Esophagus muscularis mucosa (tissue), 4 donors: ENCODE measurements at regions of chr1 and their contacts with region 1.

Region 1: GRCh38 chr1:221435504-221435904 is 306.4 kb downstream of the DUSP10 start:
- DNase-seq: no peak
- H3K4me3 ChIP-seq: no peak overlapping the region
- H3K27ac ChIP-seq: peak overlapping the region; percentile 3 to 48 (median 23)
- H3K4me1 ChIP-seq: peaks cover 12 to 26% (median 24%) of the 10 kb centered on the region in 4 donors
- H3K27me3 ChIP-seq: no peaks in the 10 kb centered on the region
- CTCF ChIP-seq: peak; percentile 93 to 99 (median 95)
- EP300 ChIP-seq: no peak
- POLR2A ChIP-seq: no peak

Region 2: DNA sequence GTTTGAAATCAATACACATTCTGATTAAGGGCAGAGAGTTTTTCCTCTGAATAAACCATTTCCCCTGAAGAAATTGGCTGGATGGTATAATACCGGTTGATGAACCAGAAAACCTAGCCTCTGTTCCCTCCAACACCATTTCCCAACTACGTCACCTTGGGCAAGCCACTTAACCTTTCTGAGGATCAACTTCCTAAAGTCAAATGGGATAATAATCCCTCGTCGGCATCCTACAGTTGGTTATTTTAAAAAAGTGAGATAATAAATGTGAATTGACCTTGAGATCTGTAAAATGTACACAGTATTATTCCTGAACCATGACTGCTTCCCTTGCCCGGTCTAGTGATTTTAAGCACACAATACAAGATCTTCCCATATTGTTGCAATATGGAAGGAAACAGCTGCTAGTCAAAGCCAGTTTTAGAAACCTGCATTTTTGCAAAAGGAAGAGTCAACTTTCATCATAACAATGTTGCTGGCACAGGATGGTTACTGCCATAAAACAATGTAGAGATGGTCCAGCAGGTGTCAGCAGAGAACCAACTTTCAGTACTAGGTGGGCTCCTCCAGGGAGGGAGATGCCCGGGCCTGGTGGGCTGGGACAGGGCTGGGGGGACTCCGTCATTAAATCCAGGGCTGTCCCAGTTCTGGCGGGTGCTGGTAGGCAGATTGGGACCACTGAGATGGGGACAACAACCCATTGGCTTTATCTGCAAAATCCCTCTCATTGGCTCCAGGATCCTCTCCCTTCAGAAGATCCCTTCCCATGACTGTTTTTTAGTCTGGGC is 561.4 kb before region 1 on chr1:
- intact Hi-C with region 1: loop called (anchors 5 kb)
- DNase-seq: no peak
- H3K4me3 ChIP-seq: no peak overlapping the region
- H3K27ac ChIP-seq: no peak overlapping the region
- H3K4me1 ChIP-seq: peaks cover 29 to 44% (median 39%) of the 10 kb centered on the region in 4 donors
- H3K27me3 ChIP-seq: no peaks in the 10 kb centered on the region
- CTCF ChIP-seq: peak; percentile 69 to 79 (median 74)
- EP300 ChIP-seq: no peak
- POLR2A ChIP-seq: no peak

Region 3: GRCh38 chr1:221268295-221268694 is 167.2 kb before region 1 on chr1:
- intact Hi-C with region 1: loop called (anchors 5 kb)
- DNase-seq: no peak
- H3K4me3 ChIP-seq: no peak overlapping the region
- H3K27ac ChIP-seq: no peak overlapping the region
- H3K4me1 ChIP-seq: peaks cover 0 to 6% (median 5%) of the 10 kb centered on the region in 4 donors
- H3K27me3 ChIP-seq: no peaks in the 10 kb centered on the region
- CTCF ChIP-seq: no peak
- EP300 ChIP-seq: no peak
- POLR2A ChIP-seq: no peak